Activated T-helper 2 cell treated with anti-CD3 and anti-CD28 coated beads, Interferon-gamma antibody, Interleukin-2, Interleukin-4, amounts not matched to agents 10 μg/mL and 5 μg/mL and 100 μg/mL, durations not matched to agents 14 hours and 24 hours and 36 hours (primary cell): ENCODE measurements at regions of chr10 and their contacts with region 1.

Region 1: GRCh38 chr10:67858971-67859370 is 21.0 kb upstream of the DNAJC12 start:
- DNase-seq: no peak
- H3K4me3 Mint-ChIP-seq: no peak overlapping the region
- H3K27ac Mint-ChIP-seq: no peak overlapping the region
- H3K4me1 Mint-ChIP-seq: peaks cover 4% of the 10 kb centered on the region
- H3K27me3 Mint-ChIP-seq: no peaks in the 10 kb centered on the region

Region 2: DNA sequence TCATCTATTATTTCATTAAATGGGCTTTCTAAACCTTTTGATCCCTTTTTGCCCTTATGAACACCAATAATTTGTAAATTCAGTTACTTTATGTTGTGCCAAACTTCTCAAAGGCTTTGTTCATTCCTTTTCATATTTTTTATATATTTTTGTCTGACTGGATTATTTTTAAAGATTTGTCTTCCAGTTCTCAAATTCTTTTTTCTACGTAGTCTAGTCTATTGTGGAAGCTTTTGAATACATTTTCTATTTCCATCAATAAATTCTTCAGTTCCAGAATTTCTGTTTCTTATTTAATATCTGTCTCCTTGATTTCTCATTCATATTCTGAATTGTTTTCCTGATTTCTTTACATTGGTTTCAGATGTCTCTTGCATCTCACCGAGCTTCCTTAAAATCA is 271.2 kb before region 1 on chr10:
- intact Hi-C with region 1: no loop called
- DNase-seq: no peak
- H3K4me3 Mint-ChIP-seq: no peak overlapping the region
- H3K27ac Mint-ChIP-seq: no peak overlapping the region
- H3K4me1 Mint-ChIP-seq: no peaks in the 10 kb centered on the region
- H3K27me3 Mint-ChIP-seq: peaks cover 6% of the 10 kb centered on the region

Region 3: DNA sequence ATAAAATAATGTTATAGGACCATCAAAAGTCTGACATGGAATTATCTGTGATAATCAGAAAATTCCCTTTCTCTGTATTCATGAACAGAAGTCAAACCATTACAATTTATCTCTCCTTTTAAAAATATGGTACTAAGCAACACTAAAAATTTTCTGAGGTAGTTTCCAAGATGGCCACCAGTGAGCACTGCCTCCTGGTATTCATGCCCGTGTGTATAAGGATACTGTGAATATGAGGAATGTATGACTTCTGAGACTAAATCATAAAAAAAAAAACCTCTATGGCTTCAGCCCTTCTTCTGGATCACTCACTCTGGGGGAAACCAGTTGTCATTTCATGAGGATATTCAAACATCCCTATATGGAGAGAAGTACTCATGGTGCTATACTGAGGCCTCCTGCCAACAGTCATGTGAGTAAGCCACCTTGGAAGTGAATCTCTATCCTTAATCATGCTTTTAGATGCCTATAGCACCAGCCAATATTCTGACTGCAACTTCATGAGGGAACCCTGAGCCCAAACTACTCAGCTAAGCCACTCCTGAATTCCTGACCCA is 66.6 kb after region 1 on chr10:
- intact Hi-C with region 1: no loop called
- DNase-seq: no peak
- H3K4me3 Mint-ChIP-seq: no peak overlapping the region
- H3K27ac Mint-ChIP-seq: no peak overlapping the region
- H3K4me1 Mint-ChIP-seq: no peaks in the 10 kb centered on the region
- H3K27me3 Mint-ChIP-seq: no peaks in the 10 kb centered on the region

Region 4: GRCh38 chr10:68096913-68097503 is 238.0 kb after region 1 on chr10:
- intact Hi-C with region 1: no loop called
- DNase-seq: no peak
- H3K4me3 Mint-ChIP-seq: no peak overlapping the region
- H3K27ac Mint-ChIP-seq: no peak overlapping the region
- H3K4me1 Mint-ChIP-seq: no peaks in the 10 kb centered on the region
- H3K27me3 Mint-ChIP-seq: peaks cover 1% of the 10 kb centered on the region

Region 5: DNA sequence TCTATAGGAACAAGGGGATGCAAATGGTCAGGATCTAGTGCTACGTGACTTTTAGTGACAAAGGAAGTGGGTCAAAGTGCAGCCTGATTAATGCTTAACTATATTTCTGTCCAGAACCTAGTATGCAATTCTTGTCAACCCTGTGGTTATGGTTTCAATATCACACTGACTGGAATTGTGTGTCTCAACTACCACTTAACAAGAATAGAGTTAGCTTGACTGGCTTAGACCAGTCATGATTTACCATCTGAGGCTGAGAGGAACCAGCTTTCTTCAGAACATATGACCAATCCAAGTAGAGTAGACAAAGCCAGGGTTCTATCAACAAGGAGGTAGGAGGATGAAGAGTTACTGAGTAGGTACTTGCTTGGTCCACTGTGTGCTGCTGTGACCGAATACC is 304.8 kb after region 1 on chr10:
- intact Hi-C with region 1: no loop called
- DNase-seq: no peak
- H3K4me3 Mint-ChIP-seq: no peak overlapping the region
- H3K27ac Mint-ChIP-seq: peak overlapping the region; percentile 7
- H3K4me1 Mint-ChIP-seq: peaks cover 9% of the 10 kb centered on the region
- H3K27me3 Mint-ChIP-seq: no peaks in the 10 kb centered on the region

Region 6: DNA sequence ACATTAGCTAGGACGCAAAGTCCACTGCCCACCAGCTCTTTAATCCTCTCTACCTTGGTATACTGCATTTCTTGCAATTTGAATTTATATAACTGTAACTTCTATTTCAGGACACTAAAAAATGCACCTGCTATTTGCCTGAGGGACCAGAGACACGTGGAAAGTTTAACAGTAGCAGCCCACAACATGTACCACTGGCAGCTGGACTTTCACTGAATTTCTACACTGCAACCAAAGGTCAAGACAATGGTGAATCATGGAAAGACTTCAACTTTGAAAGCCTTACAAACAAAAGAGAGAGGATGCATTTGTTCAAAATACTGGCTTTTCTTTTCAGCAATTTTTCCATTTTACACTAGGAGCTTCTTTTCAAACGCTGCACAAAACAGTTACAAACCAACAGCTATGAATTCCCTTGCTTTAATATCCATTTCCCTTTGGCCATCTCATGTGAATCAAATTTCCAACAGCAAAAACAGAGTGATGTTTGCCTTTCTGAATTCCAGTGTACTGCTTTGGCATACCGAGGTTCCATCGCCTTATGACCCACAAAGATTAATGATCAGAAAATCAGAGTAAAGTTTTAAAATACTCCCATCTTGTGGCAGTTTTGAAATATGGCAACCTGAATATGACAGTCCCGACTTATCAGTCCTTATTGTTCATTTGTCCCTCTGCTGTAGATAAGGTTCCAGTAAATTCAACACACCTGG is 443.0 kb after region 1 on chr10:
- intact Hi-C with region 1: loop called (anchors 5 kb)
- DNase-seq: no peak
- H3K4me3 Mint-ChIP-seq: no peak overlapping the region
- H3K27ac Mint-ChIP-seq: no peak overlapping the region
- H3K4me1 Mint-ChIP-seq: peaks cover 3% of the 10 kb centered on the region
- H3K27me3 Mint-ChIP-seq: no peaks in the 10 kb centered on the region